ENCODE measurements at regions of chr16 and their contacts with region 1.

Region 1: GRCh38 chr16:1378804-1379303 is 27.1 kb downstream of the GNPTG start:
- DNase-seq: peak in 5 of 9 donors; percentile 11 to 77 (median 45)
- ATAC-seq: peak; percentile 81
- H3K4me3 ChIP-seq: peak overlapping the region; percentile 17
- H3K4me3 Mint-ChIP-seq: peak overlapping the region in 9 of 10 donors; percentile 17 to 88 (median 55)
- H3K27ac ChIP-seq: peak overlapping the region; percentile 52
- H3K27ac Mint-ChIP-seq: peak overlapping the region in 7 of 9 donors; percentile 4 to 86 (median 62)
- H3K4me1 ChIP-seq: no peaks in the 10 kb centered on the region
- H3K4me1 Mint-ChIP-seq: peaks cover 6 to 18% (median 15%) of the 10 kb centered on the region in 7 donors
- H3K27me3 ChIP-seq: no peaks in the 10 kb centered on the region
- H3K27me3 Mint-ChIP-seq: no peaks in the 10 kb centered on the region

Region 2: GRCh38 chr16:636206-637080 is 742.4 kb before region 1 on chr16 and contains the start of gene METTL26:
- CTCF ChIA-PET with region 1: no interaction called
- POLR2A ChIA-PET with region 1: no interaction called
- intact Hi-C with region 1: no loop called
- DNase-seq: peak; percentile 91 to 98 (median 94)
- ATAC-seq: peak; percentile 90
- H3K4me3 ChIP-seq: peak within 1 kb of the TSS; percentile 99
- H3K4me3 Mint-ChIP-seq: peak within 1 kb of the TSS; percentile 92 to 99 (median 98)
- H3K27ac ChIP-seq: peak within 1 kb of the TSS; percentile 76
- H3K27ac Mint-ChIP-seq: peak within 1 kb of the TSS; percentile 97 to 99 (median 99)
- H3K4me1 ChIP-seq: peaks cover 5 to 14% of the 10 kb centered on the region in 2 donors
- H3K4me1 Mint-ChIP-seq: peaks cover 0 to 13% (median 10%) of the 10 kb centered on the region in 7 donors
- H3K27me3 ChIP-seq: no peaks in the 10 kb centered on the region
- H3K27me3 Mint-ChIP-seq: peaks cover 0 to 6% (median 0%) of the 10 kb centered on the region in 5 donors
- total RNA-seq, gene METTL26: 41.7 to 97.5 (median 64.0) TPM

Region 3: DNA sequence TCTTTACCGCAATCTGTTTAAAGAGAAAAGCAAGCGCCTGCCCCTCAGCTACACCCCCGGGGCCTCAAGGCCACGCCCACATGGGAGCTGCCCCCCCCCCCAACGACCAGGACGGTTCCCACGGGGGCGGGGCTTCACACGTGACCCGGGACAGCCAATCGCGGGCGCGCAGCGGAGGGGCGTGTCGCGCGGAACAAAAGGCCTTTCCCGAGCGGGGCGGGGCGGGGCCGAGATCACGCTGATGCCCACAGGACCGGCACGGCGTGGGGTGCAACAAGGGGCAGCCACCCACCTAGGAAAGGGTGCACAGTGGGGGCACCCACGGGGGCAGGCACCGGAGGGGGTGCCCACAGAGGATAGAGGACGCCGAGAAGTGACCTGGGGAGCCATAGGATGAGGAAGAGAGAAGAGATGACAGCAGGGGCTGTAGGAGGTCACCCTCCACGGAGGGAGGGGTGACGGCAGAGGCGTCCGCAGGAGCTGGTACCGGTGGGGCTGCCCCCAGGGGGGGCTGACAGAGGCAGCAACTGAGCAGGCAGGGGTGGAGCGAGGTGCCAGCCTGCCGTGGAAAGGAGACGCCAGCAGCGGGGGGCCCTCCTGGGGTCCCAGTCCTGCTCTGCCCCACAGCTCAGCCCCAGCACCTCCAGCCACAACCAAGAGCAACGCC is 29.4 kb after region 1 on chr16:
- CTCF ChIA-PET with region 1: no interaction called
- POLR2A ChIA-PET with region 1: no interaction called
- intact Hi-C with region 1: loop called in 1 of 2 experiments (anchors 1 kb)
- DNase-seq: peak; percentile 88 to 98 (median 92)
- ATAC-seq: peak; percentile 99
- H3K4me3 ChIP-seq: peak overlapping the region; percentile 48
- H3K4me3 Mint-ChIP-seq: peak overlapping the region; percentile 57 to 85 (median 71)
- H3K27ac ChIP-seq: peak overlapping the region; percentile 59
- H3K27ac Mint-ChIP-seq: peak overlapping the region in 6 of 9 donors; percentile 13 to 78 (median 60)
- H3K4me1 ChIP-seq: peaks cover 5 to 9% of the 10 kb centered on the region in 2 donors
- H3K4me1 Mint-ChIP-seq: peaks cover 0 to 58% (median 33%) of the 10 kb centered on the region in 7 donors
- H3K27me3 ChIP-seq: no peaks in the 10 kb centered on the region
- H3K27me3 Mint-ChIP-seq: no peaks in the 10 kb centered on the region

Region 4: GRCh38 chr16:1413684-1414531 is 35.1 kb after region 1 on chr16:
- CTCF ChIA-PET with region 1: no interaction called
- POLR2A ChIA-PET with region 1: no interaction called
- intact Hi-C with region 1: loop called in 1 of 2 experiments (anchors 2 kb)
- DNase-seq: peak; percentile 44 to 77 (median 57)
- ATAC-seq: peak; percentile 66
- H3K4me3 ChIP-seq: peak overlapping the region; percentile 79
- H3K4me3 Mint-ChIP-seq: peak overlapping the region; percentile 75 to 91 (median 85)
- H3K27ac ChIP-seq: peak overlapping the region; percentile 89
- H3K27ac Mint-ChIP-seq: peak overlapping the region; percentile 70 to 92 (median 88)
- H3K4me1 ChIP-seq: peaks cover 0 to 8% of the 10 kb centered on the region in 2 donors
- H3K4me1 Mint-ChIP-seq: peaks cover 0 to 33% (median 26%) of the 10 kb centered on the region in 7 donors
- H3K27me3 ChIP-seq: no peaks in the 10 kb centered on the region
- H3K27me3 Mint-ChIP-seq: no peaks in the 10 kb centered on the region

Region 5: DNA sequence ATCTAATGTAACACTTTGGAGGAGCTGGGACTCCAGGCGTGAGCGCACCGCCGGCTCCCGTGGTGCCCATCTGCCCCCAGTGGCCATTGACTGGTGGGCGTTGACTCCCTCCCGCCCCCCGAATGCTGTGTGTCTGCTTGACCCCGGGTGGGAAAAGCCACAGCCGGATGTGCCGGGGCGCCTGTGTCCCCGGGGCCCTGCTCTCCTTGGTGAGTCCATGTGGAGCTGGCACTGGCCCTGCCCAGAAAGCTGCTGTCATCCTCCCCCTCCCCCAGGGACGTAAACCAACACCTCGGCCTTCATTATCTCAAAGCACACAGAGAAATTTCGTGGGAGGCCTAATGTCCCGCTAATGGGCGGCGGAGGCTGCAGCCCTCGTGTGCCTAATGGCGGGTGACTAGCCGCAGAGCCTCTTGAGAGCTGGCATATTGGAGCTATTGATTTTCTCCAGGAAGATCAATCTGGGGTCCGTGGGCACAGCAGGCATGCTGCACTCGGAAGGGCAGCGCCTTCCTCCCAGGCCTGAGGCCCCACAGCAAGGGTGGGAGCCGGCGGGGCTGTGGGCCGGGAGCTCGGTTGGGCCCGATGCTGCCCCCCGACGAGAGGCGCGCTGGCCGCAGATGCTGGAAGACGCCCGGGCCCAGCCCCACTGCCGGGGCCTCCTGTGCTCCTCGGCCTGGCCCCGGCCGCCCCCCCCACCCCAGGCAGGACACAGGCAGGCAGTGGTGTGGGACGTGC is 48.0 kb after region 1 on chr16:
- CTCF ChIA-PET with region 1: no interaction called
- POLR2A ChIA-PET with region 1: no interaction called
- intact Hi-C with region 1: no loop called
- DNase-seq: no peak
- ATAC-seq: no peak
- H3K4me3 ChIP-seq: no peak overlapping the region
- H3K4me3 Mint-ChIP-seq: no peak overlapping the region
- H3K27ac ChIP-seq: no peak overlapping the region
- H3K27ac Mint-ChIP-seq: no peak overlapping the region
- H3K4me1 ChIP-seq: no peaks in the 10 kb centered on the region
- H3K4me1 Mint-ChIP-seq: peaks cover 0 to 5% (median 3%) of the 10 kb centered on the region in 7 donors
- H3K27me3 ChIP-seq: no peaks in the 10 kb centered on the region
- H3K27me3 Mint-ChIP-seq: no peaks in the 10 kb centered on the region

Region 6: GRCh38 chr16:1474796-1475551 is 96.1 kb after region 1 on chr16 and contains the start of gene CLCN7:
- CTCF ChIA-PET with region 1: no interaction called
- POLR2A ChIA-PET with region 1: no interaction called
- intact Hi-C with region 1: no loop called
- DNase-seq: peak; percentile 79 to 95 (median 84)
- ATAC-seq: peak; percentile 91
- H3K4me3 ChIP-seq: peak within 1 kb of the TSS; percentile 67
- H3K4me3 Mint-ChIP-seq: peak within 1 kb of the TSS; percentile 80 to 90 (median 85)
- H3K27ac ChIP-seq: peak within 1 kb of the TSS; percentile 100
- H3K27ac Mint-ChIP-seq: peak within 1 kb of the TSS; percentile 77 to 95 (median 88)
- H3K4me1 ChIP-seq: peaks cover 13 to 20% of the 10 kb centered on the region in 2 donors
- H3K4me1 Mint-ChIP-seq: peaks cover 18 to 52% (median 42%) of the 10 kb centered on the region in 7 donors
- H3K27me3 ChIP-seq: no peaks in the 10 kb centered on the region
- H3K27me3 Mint-ChIP-seq: no peaks in the 10 kb centered on the region
- total RNA-seq, gene CLCN7: 74.8 to 140 (median 115) TPM

Region 7: GRCh38 chr16:1526608-1527555 is 148.0 kb after region 1 on chr16:
- CTCF ChIA-PET with region 1: no interaction called
- POLR2A ChIA-PET with region 1: no interaction called
- intact Hi-C with region 1: no loop called
- DNase-seq: peak in 7 of 9 donors; percentile 42 to 58 (median 53)
- ATAC-seq: peak; percentile 65
- H3K4me3 ChIP-seq: peak overlapping the region; percentile 46
- H3K4me3 Mint-ChIP-seq: peak overlapping the region; percentile 35 to 85 (median 78)
- H3K27ac ChIP-seq: peak overlapping the region; percentile 71
- H3K27ac Mint-ChIP-seq: peak overlapping the region; percentile 62 to 92 (median 86)
- H3K4me1 ChIP-seq: peaks cover 10 to 33% of the 10 kb centered on the region in 2 donors
- H3K4me1 Mint-ChIP-seq: peaks cover 12 to 50% (median 33%) of the 10 kb centered on the region in 7 donors
- H3K27me3 ChIP-seq: no peaks in the 10 kb centered on the region
- H3K27me3 Mint-ChIP-seq: no peaks in the 10 kb centered on the region

Measured in naive thymus-derived CD4-positive, alpha-beta T cell (primary cell).